Activated naive CD4-positive, alpha-beta T cell treated with anti-CD3 and anti-CD28 coated beads for 36 hours (primary cell): ENCODE measurements at regions of chr7 and their contacts with region 1.

Region 1: GRCh38 chr7:74401137-74401859 is 52.4 kb upstream of the GTF2IRD1 start:
- DNase-seq: peak; percentile 81
- H3K4me3 Mint-ChIP-seq: no peak overlapping the region
- H3K27ac Mint-ChIP-seq: no peak overlapping the region
- H3K4me1 Mint-ChIP-seq: no peaks in the 10 kb centered on the region
- H3K27me3 Mint-ChIP-seq: no peaks in the 10 kb centered on the region

Region 2: GRCh38 chr7:74068393-74069085 is 332.8 kb before region 1 on chr7:
- CTCF ChIA-PET with region 1: interaction called, 32 read pairs
- intact Hi-C with region 1: loop called (anchors 1 kb)
- DNase-seq: no peak
- H3K4me3 Mint-ChIP-seq: no peak overlapping the region
- H3K27ac Mint-ChIP-seq: no peak overlapping the region
- H3K4me1 Mint-ChIP-seq: no peaks in the 10 kb centered on the region
- H3K27me3 Mint-ChIP-seq: no peaks in the 10 kb centered on the region

Region 3: DNA sequence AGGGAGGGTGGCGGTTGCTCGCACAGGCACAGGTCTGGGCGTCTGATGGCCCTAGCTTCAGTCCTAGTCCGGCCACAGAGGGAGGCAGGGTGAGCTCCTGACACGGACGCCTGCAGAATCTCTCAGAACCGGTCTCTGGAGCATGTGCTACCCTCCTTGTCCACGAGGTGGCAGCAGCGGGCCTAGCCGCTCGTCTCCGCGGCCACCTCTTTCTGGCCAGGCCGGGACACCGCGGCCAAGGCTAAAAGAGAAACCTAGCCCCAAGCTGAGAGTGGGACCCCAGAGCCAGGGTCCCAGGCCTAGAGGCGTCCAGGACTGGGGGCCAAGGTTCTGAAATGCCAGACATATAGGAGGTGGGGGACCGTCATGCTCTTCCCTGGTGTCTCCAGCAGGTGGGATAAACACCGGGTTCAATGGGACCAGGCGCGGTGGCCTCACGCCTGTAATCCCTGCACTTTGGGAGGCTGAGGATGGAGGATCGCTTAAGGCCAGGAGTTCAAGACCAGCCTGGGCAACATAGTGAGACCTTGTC is 194.6 kb before region 1 on chr7:
- CTCF ChIA-PET with region 1: interaction called, 151 read pairs
- intact Hi-C with region 1: loop called (anchors 1 kb)
- DNase-seq: peak; percentile 84
- H3K4me3 Mint-ChIP-seq: no peak overlapping the region
- H3K27ac Mint-ChIP-seq: no peak overlapping the region
- H3K4me1 Mint-ChIP-seq: peaks cover 19% of the 10 kb centered on the region
- H3K27me3 Mint-ChIP-seq: peaks cover 4% of the 10 kb centered on the region

Region 4: GRCh38 chr7:74289018-74289658 is 112.2 kb before region 1 on chr7 and contains the start of gene CLIP2:
- CTCF ChIA-PET with region 1: interaction called, 7 read pairs
- intact Hi-C with region 1: loop called (anchors 5 kb)
- DNase-seq: peak; percentile 74
- H3K4me3 Mint-ChIP-seq: peak within 1 kb of the TSS; percentile 73
- H3K27ac Mint-ChIP-seq: no peak within 1 kb of the TSS
- H3K4me1 Mint-ChIP-seq: peaks cover 11% of the 10 kb centered on the region
- H3K27me3 Mint-ChIP-seq: peaks cover 12% of the 10 kb centered on the region
- total RNA-seq, gene CLIP2: 1.2 to 1.6 TPM

Region 5: DNA sequence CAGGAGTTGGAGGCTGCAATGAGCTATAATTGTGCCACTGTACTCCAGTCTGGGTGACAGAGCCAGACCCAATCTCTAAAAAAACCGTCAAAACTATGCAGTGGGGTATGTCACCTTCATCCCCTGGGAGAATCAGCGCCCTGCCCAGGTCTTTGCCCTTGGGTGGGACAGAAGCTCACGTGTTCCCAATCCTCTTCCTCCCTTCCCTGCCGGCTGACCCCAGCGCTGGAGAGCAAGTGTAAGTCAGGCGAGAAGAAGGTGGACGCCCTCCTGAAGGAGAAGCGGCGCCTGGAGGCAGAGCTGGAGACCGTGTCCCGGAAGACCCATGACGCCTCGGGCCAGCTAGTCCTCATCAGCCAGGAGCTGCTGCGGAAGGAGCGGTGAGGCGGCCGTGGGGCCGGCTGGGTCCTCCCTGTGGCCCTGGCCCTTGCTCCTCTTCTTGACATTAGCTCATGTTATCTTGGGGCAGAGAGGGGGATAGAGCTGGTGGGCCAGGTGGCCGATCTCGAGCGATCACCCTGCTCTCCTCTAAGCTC is 12.3 kb before region 1 on chr7:
- CTCF ChIA-PET with region 1: interaction called, 23 read pairs
- intact Hi-C with region 1: no loop called
- DNase-seq: no peak
- H3K4me3 Mint-ChIP-seq: no peak overlapping the region
- H3K27ac Mint-ChIP-seq: no peak overlapping the region
- H3K4me1 Mint-ChIP-seq: no peaks in the 10 kb centered on the region
- H3K27me3 Mint-ChIP-seq: no peaks in the 10 kb centered on the region

Region 6: GRCh38 chr7:74606101-74606908 is 205.0 kb after region 1 on chr7:
- CTCF ChIA-PET with region 1: no interaction called
- intact Hi-C with region 1: no loop called
- DNase-seq: peak; percentile 55
- H3K4me3 Mint-ChIP-seq: peak overlapping the region; percentile 59
- H3K27ac Mint-ChIP-seq: no peak overlapping the region
- H3K4me1 Mint-ChIP-seq: peaks cover 5% of the 10 kb centered on the region
- H3K27me3 Mint-ChIP-seq: no peaks in the 10 kb centered on the region